ENCODE measurements at regions of chr3 and their contacts with region 1.

Region 1: GRCh38 chr3:152719264-152719663 is 115.7 kb upstream of the P2RY1 start:
- DNase-seq: no peak
- H3K4me3 Mint-ChIP-seq: no peak overlapping the region
- H3K27ac Mint-ChIP-seq: peak overlapping the region; percentile 65
- H3K4me1 Mint-ChIP-seq: peaks cover 8% of the 10 kb centered on the region
- H3K27me3 Mint-ChIP-seq: no peaks in the 10 kb centered on the region
- CTCF ChIP-seq: no peak

Region 2: GRCh38 chr3:152825566-152825965 is 106.3 kb after region 1 on chr3:
- CTCF ChIA-PET with region 1: interaction called, 5 read pairs
- intact Hi-C with region 1: loop called (anchors 5 kb)
- DNase-seq: peak; percentile 41
- H3K4me3 Mint-ChIP-seq: no peak overlapping the region
- H3K27ac Mint-ChIP-seq: no peak overlapping the region
- H3K4me1 Mint-ChIP-seq: peaks cover 6% of the 10 kb centered on the region
- H3K27me3 Mint-ChIP-seq: no peaks in the 10 kb centered on the region
- CTCF ChIP-seq: no peak